ENCODE measurements at regions of chr6 and their contacts with region 1.

Region 1: DNA sequence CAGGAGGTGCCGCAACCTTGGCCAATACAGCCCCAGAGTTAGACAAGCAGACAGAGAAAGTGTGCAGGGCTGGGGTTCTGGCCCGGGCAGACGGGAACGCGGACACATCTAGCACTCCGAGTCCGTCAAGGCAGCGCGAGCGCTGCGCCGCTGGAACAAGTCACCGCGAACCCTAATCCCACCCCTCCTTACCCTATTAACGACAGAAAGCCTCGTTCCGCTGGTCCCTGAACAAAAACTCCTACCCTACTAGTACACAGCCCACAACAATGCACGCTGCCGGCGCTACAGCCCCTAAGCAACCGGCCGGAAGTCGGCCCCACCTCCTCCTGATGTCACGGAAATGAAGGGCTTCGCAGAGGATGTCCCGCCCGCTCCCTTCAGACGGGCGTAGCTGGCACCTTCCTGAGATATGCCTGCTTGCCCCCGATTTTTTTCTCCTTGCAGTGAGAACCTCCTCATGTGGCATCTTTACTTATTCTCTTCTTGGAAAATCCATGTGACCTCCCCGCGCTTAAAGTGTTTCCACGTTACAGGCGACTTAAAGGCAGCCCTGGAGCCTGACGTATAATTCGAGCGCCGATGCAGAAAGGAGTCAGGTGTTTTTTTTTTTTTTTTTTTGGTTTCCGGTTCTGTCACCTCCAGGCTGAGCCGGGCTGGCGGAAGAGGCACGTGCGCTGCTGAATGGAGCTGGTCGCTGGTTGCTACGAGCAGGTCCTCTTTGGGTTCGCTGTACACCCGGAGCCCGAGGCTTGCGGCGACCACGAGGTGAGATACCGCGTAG is at the starts of genes C6orf52 and PAK1IP1:
- DNase-seq: peak; percentile 83 to 97 (median 94)
- ATAC-seq: peak; percentile 91
- H3K4me3 ChIP-seq: peak within 1 kb of the TSS; percentile 90 to 97
- H3K4me3 Mint-ChIP-seq: peak within 1 kb of the TSS; percentile 98
- H3K27ac ChIP-seq: peak within 1 kb of the TSS; percentile 97 to 99
- H3K27ac Mint-ChIP-seq: peak within 1 kb of the TSS; percentile 100
- H3K4me1 ChIP-seq: peaks cover 23% of the 10 kb centered on the region
- H3K4me1 Mint-ChIP-seq: peaks cover 46% of the 10 kb centered on the region
- H3K27me3 ChIP-seq: no peaks in the 10 kb centered on the region
- H3K27me3 Mint-ChIP-seq: no peaks in the 10 kb centered on the region
- CTCF ChIP-seq: no peak
- total RNA-seq, gene C6orf52: not detected
- total RNA-seq, gene PAK1IP1: 6.5 to 6.8 TPM

Region 2: GRCh38 chr6:10300071-10300470 is 394.4 kb before region 1 on chr6:
- CTCF ChIA-PET with region 1: no interaction called
- POLR2A ChIA-PET with region 1: no interaction called
- intact Hi-C with region 1: no loop called
- DNase-seq: no peak
- ATAC-seq: no peak
- H3K4me3 ChIP-seq: no peak overlapping the region
- H3K4me3 Mint-ChIP-seq: no peak overlapping the region
- H3K27ac ChIP-seq: no peak overlapping the region
- H3K27ac Mint-ChIP-seq: no peak overlapping the region
- H3K4me1 ChIP-seq: no peaks in the 10 kb centered on the region
- H3K4me1 Mint-ChIP-seq: no peaks in the 10 kb centered on the region
- H3K27me3 ChIP-seq: no peaks in the 10 kb centered on the region
- H3K27me3 Mint-ChIP-seq: peaks cover 7% of the 10 kb centered on the region
- CTCF ChIP-seq: no peak

Region 3: DNA sequence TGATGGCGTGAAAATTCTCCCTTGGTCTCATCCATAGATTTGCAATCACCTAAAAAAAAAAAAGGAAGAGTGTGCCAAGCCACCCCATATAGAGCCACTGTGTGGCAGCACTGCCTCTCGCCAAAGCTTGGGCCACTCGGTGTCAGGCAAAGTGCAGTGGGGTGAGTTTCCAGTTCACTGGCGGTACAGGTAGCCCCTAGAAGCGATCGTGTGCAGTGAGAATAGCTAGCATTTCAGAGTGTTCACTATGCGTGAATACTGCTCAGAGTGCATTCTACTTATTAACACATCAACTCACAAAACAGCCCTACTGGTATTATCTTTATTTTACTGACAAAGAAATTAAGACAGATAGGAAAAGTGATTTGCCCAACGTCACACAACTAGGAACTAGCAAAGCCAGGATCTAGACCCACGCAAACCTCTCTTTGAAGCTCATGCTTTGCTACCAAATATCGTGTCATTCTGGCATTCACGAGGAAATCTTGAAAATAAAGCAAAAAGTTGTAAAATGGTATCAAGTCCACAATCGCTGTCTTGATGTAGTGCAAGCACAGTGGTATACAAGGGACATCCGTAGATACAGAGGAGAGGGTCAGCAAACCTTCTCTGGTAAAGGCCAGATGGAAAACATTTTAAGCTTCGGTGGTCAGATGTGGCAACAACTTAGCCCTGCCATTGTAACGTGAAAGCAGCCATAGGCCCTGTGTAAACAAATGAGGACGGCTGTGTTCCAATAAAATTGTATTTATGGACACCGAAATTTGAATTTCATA is 183.7 kb before region 1 on chr6:
- CTCF ChIA-PET with region 1: no interaction called
- POLR2A ChIA-PET with region 1: no interaction called
- intact Hi-C with region 1: loop called in 1 of 2 experiments (anchors 1 kb)
- DNase-seq: peak in 7 of 9 experiments; percentile 20 to 64 (median 37)
- ATAC-seq: peak; percentile 66
- H3K4me3 ChIP-seq: no peak overlapping the region
- H3K4me3 Mint-ChIP-seq: no peak overlapping the region
- H3K27ac ChIP-seq: no peak overlapping the region
- H3K27ac Mint-ChIP-seq: no peak overlapping the region
- H3K4me1 ChIP-seq: no peaks in the 10 kb centered on the region
- H3K4me1 Mint-ChIP-seq: peaks cover 4% of the 10 kb centered on the region
- H3K27me3 ChIP-seq: peaks cover 0 to 4% of the 10 kb centered on the region in 2 experiments
- H3K27me3 Mint-ChIP-seq: no peaks in the 10 kb centered on the region
- CTCF ChIP-seq: peak; percentile 54

Region 4: DNA sequence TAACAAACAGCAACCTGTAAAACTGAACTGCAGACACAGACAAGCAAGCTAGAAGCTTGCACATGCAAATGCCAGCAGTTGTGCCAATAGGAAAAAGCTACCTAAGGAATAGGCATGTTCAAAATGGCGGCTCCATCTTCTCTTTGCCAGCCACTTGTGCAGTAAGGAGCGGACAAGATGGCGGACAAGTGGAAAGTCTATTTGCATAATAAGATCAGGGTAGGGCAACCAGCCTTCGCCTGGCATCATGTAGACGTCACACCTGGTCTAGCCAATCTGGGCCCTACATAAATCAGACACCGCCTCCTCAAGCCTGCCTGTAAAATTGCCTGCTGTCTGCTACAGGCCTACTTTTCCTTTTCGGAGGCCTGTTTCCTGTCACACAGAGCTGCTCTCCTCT is 18.1 kb before region 1 on chr6:
- CTCF ChIA-PET with region 1: no interaction called
- POLR2A ChIA-PET with region 1: no interaction called
- intact Hi-C with region 1: no loop called
- DNase-seq: no peak
- ATAC-seq: no peak
- H3K4me3 ChIP-seq: no peak overlapping the region
- H3K4me3 Mint-ChIP-seq: no peak overlapping the region
- H3K27ac ChIP-seq: no peak overlapping the region
- H3K27ac Mint-ChIP-seq: no peak overlapping the region
- H3K4me1 ChIP-seq: no peaks in the 10 kb centered on the region
- H3K4me1 Mint-ChIP-seq: no peaks in the 10 kb centered on the region
- H3K27me3 ChIP-seq: peaks cover 0 to 2% of the 10 kb centered on the region in 2 experiments
- H3K27me3 Mint-ChIP-seq: no peaks in the 10 kb centered on the region
- CTCF ChIP-seq: no peak

Region 5: GRCh38 chr6:10722820-10723566 is 28.5 kb after region 1 on chr6 and contains the start of gene TMEM14C:
- CTCF ChIA-PET with region 1: interaction called, 12 read pairs
- POLR2A ChIA-PET with region 1: interaction called, 33 read pairs
- intact Hi-C with region 1: loop called (anchors 1 kb)
- DNase-seq: peak in 8 of 9 experiments; percentile 60 to 90 (median 82)
- ATAC-seq: peak; percentile 72
- H3K4me3 ChIP-seq: peak within 1 kb of the TSS; percentile 67 to 70
- H3K4me3 Mint-ChIP-seq: peak within 1 kb of the TSS; percentile 97
- H3K27ac ChIP-seq: peak within 1 kb of the TSS; percentile 49 to 65
- H3K27ac Mint-ChIP-seq: peak within 1 kb of the TSS; percentile 98
- H3K4me1 ChIP-seq: peaks cover 30% of the 10 kb centered on the region
- H3K4me1 Mint-ChIP-seq: peaks cover 64% of the 10 kb centered on the region
- H3K27me3 ChIP-seq: no peaks in the 10 kb centered on the region
- H3K27me3 Mint-ChIP-seq: no peaks in the 10 kb centered on the region
- CTCF ChIP-seq: no peak
- total RNA-seq, gene TMEM14C: 7.5 to 8.5 TPM

Region 6: DNA sequence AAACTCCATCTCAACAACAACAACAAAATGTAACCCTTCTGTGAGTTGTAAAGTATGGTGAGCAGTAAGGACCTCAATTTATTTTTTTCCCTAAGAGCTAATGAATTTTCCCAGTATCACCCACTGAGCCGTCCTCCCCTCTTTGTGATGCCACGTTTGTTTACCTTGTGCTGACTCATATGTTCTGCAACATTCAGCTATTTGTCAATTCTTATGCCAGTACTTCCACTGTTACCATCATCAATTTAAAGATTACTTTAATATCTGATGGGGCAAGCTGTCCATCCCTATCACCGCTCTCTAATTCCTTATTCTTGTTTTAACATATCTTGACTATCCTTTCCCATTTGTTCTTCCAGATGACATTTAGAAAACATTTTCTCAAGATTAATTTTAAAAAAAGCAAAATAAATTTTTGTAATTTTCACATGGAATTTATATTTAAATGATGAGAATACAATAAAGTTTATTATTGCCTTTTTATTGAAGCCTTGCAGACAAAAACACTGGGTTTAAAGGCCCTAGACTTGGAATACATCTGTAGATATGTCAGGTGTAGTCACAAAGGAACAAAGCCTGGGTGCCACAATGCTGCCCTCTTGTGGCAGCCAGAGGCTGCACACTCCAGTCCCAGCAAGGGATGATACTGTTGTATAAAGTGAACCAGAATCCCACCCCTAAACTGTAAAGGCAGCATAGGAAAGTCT is 106.5 kb after region 1 on chr6:
- CTCF ChIA-PET with region 1: no interaction called
- POLR2A ChIA-PET with region 1: no interaction called
- intact Hi-C with region 1: loop called in 1 of 2 experiments (anchors 1 kb)
- DNase-seq: peak; percentile 26 to 77 (median 61)
- ATAC-seq: peak; percentile 81
- H3K4me3 ChIP-seq: no peak overlapping the region
- H3K4me3 Mint-ChIP-seq: no peak overlapping the region
- H3K27ac ChIP-seq: no peak overlapping the region
- H3K27ac Mint-ChIP-seq: no peak overlapping the region
- H3K4me1 ChIP-seq: no peaks in the 10 kb centered on the region
- H3K4me1 Mint-ChIP-seq: no peaks in the 10 kb centered on the region
- H3K27me3 ChIP-seq: no peaks in the 10 kb centered on the region
- H3K27me3 Mint-ChIP-seq: no peaks in the 10 kb centered on the region
- CTCF ChIP-seq: peak; percentile 96

Region 7: GRCh38 chr6:11093589-11094410 is 399.3 kb after region 1 on chr6 and contains the start of gene SMIM13:
- CTCF ChIA-PET with region 1: interaction called, 3 read pairs
- POLR2A ChIA-PET with region 1: no interaction called
- intact Hi-C with region 1: loop called (anchors 1 to 2 kb)
- DNase-seq: peak; percentile 87 to 96 (median 95)
- ATAC-seq: peak; percentile 92
- H3K4me3 ChIP-seq: peak within 1 kb of the TSS; percentile 85 to 90
- H3K4me3 Mint-ChIP-seq: peak within 1 kb of the TSS; percentile 97
- H3K27ac ChIP-seq: peak within 1 kb of the TSS; percentile 81 to 92
- H3K27ac Mint-ChIP-seq: peak within 1 kb of the TSS; percentile 97
- H3K4me1 ChIP-seq: peaks cover 13% of the 10 kb centered on the region
- H3K4me1 Mint-ChIP-seq: peaks cover 30% of the 10 kb centered on the region
- H3K27me3 ChIP-seq: no peaks in the 10 kb centered on the region
- H3K27me3 Mint-ChIP-seq: no peaks in the 10 kb centered on the region
- CTCF ChIP-seq: peak; percentile 75
- total RNA-seq, gene SMIM13: 4.7 to 5.4 TPM

Region 8: GRCh38 chr6:11537229-11538051 is 842.9 kb after region 1 on chr6 and contains the start of gene TMEM170B:
- CTCF ChIA-PET with region 1: no interaction called
- POLR2A ChIA-PET with region 1: no interaction called
- intact Hi-C with region 1: loop called in 1 of 2 experiments (anchors 5 kb)
- DNase-seq: peak; percentile 94 to 99 (median 97)
- ATAC-seq: peak; percentile 93
- H3K4me3 ChIP-seq: peak within 1 kb of the TSS; percentile 71 to 85
- H3K4me3 Mint-ChIP-seq: peak within 1 kb of the TSS; percentile 85
- H3K27ac ChIP-seq: peak within 1 kb of the TSS; percentile 36 to 60
- H3K27ac Mint-ChIP-seq: peak within 1 kb of the TSS; percentile 74
- H3K4me1 ChIP-seq: peaks cover 10% of the 10 kb centered on the region
- H3K4me1 Mint-ChIP-seq: peaks cover 18% of the 10 kb centered on the region
- H3K27me3 ChIP-seq: no peaks in the 10 kb centered on the region
- H3K27me3 Mint-ChIP-seq: peaks cover 7% of the 10 kb centered on the region
- CTCF ChIP-seq: no peak
- total RNA-seq, gene TMEM170B: 2.2 TPM